PC-9 (cell line): ENCODE measurements at regions of chr9 and their contacts with region 1.

Region 1: GRCh38 chr9:112465352-112465751 is 21.3 kb upstream of the KIAA1958 start:
- DNase-seq: no peak
- H3K4me3 ChIP-seq: no peak overlapping the region
- H3K27ac ChIP-seq: no peak overlapping the region
- H3K4me1 ChIP-seq: no peaks in the 10 kb centered on the region
- H3K27me3 ChIP-seq: no peaks in the 10 kb centered on the region
- CTCF ChIP-seq: no peak

Region 2: GRCh38 chr9:111330124-111330523 is 1135.2 kb before region 1 on chr9 and contains the start of gene OR2K2:
- CTCF ChIA-PET with region 1: no interaction called
- POLR2A ChIA-PET with region 1: interaction called, 10 read pairs
- intact Hi-C with region 1: no loop called
- DNase-seq: no peak
- H3K4me3 ChIP-seq: no peak within 1 kb of the TSS
- H3K27ac ChIP-seq: no peak within 1 kb of the TSS
- H3K4me1 ChIP-seq: no peaks in the 10 kb centered on the region
- H3K27me3 ChIP-seq: no peaks in the 10 kb centered on the region
- CTCF ChIP-seq: no peak
- total RNA-seq, gene OR2K2: not detected in 2 replicates

Region 3: GRCh38 chr9:111783857-111784256 is 681.5 kb before region 1 on chr9:
- CTCF ChIA-PET with region 1: no interaction called
- POLR2A ChIA-PET with region 1: no interaction called
- intact Hi-C with region 1: no loop called
- DNase-seq: no peak
- H3K4me3 ChIP-seq: no peak overlapping the region
- H3K27ac ChIP-seq: no peak overlapping the region
- H3K4me1 ChIP-seq: no peaks in the 10 kb centered on the region
- H3K27me3 ChIP-seq: no peaks in the 10 kb centered on the region
- CTCF ChIP-seq: no peak

Region 4: DNA sequence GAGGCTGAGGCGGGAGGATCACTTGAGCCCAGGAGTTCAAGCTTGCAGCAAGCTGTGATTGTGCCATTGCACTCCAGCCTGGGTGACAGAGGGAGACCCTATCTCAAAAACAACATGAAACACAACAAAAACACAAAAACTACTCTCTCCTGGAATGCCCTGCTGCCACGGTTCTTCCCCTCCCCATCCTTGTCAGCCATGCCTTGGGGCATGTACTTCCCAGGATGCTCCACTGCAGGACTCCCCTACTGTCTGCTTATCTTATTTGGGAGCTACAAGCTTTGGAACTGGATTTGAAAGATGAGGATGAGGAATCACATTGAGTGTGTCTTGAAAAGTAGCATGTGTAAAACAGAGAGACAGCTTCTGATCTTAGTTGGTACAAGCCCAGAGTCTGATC is 18.8 kb before region 1 on chr9:
- CTCF ChIA-PET with region 1: no interaction called
- POLR2A ChIA-PET with region 1: no interaction called
- intact Hi-C with region 1: no loop called
- DNase-seq: no peak
- H3K4me3 ChIP-seq: no peak overlapping the region
- H3K27ac ChIP-seq: no peak overlapping the region
- H3K4me1 ChIP-seq: no peaks in the 10 kb centered on the region
- H3K27me3 ChIP-seq: no peaks in the 10 kb centered on the region
- CTCF ChIP-seq: no peak

Region 5: GRCh38 chr9:112905084-112905483 is 439.7 kb after region 1 on chr9:
- CTCF ChIA-PET with region 1: no interaction called
- POLR2A ChIA-PET with region 1: no interaction called
- intact Hi-C with region 1: loop called (anchors 10 kb)
- DNase-seq: no peak
- H3K4me3 ChIP-seq: no peak overlapping the region
- H3K27ac ChIP-seq: no peak overlapping the region
- H3K4me1 ChIP-seq: no peaks in the 10 kb centered on the region
- H3K27me3 ChIP-seq: no peaks in the 10 kb centered on the region
- CTCF ChIP-seq: no peak

Region 6: GRCh38 chr9:112921549-112921948 is 456.2 kb after region 1 on chr9:
- CTCF ChIA-PET with region 1: no interaction called
- POLR2A ChIA-PET with region 1: no interaction called
- intact Hi-C with region 1: no loop called
- DNase-seq: peak in 1 of 2 experiments; percentile 50
- H3K4me3 ChIP-seq: no peak overlapping the region
- H3K27ac ChIP-seq: no peak overlapping the region
- H3K4me1 ChIP-seq: peaks cover 28% of the 10 kb centered on the region
- H3K27me3 ChIP-seq: no peaks in the 10 kb centered on the region
- CTCF ChIP-seq: peak; percentile 57; the same call in 1 of the 2 replicates